ENCODE measurements at regions of chr10 and their contacts with region 1.

Region 1: GRCh38 chr10:62715383-62715782 is 89.1 kb upstream of the ADO start:
- DNase-seq: no peak
- H3K4me3 Mint-ChIP-seq: no peak overlapping the region
- H3K27ac Mint-ChIP-seq: no peak overlapping the region
- H3K4me1 Mint-ChIP-seq: peaks cover 12% of the 10 kb centered on the region
- H3K27me3 Mint-ChIP-seq: no peaks in the 10 kb centered on the region

Region 2: DNA sequence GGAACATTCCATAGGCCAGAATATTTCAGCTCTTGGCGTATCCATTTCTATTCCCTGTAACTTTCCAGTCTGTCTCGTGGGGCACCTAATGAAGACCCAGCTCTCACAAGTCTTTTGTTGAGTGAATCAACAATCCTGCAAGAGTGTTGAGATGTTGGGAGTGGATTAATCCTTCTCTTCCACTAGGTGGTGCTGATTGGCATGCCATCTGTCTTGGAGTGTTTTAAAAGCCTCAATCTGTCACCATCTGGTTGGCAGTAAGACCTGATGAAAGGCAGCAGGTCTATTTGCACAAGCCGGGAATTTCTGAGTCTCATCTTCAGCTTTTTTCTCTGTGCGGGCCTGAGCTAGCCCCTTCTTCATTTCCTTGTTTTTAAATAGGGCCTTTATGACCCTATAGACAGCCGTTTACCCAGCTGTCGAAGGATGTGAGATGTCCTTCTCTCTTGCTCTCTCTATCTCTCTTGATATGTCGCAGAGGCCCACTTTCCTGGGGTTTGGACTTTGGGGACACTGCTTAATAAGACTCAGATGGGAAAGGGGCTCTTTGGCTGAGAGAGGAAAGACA is 160.7 kb before region 1 on chr10:
- intact Hi-C with region 1: no loop called
- DNase-seq: no peak
- H3K4me3 Mint-ChIP-seq: no peak overlapping the region
- H3K27ac Mint-ChIP-seq: no peak overlapping the region
- H3K4me1 Mint-ChIP-seq: no peaks in the 10 kb centered on the region
- H3K27me3 Mint-ChIP-seq: peaks cover 35% of the 10 kb centered on the region

Region 3: DNA sequence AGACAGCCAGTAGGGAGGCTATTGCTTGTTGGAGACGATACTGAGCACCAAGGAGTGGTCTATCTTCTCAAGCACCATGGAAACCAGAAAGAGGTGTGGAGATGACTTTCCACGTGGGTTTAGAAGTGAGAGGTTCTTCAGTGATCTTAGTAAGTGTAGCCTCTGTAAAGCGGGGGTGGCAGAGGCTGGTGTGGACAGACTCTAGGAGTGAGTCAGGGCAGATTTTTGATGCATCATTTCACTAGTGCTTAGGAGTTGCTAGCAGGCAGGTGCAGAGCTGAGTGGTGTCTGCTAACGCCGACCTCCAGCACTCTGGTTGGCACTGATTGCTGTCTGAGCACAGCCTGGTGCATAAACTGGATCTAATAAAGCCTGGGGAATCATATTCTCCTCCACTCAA is 10.8 kb after region 1 on chr10:
- intact Hi-C with region 1: loop called (anchors 1 kb)
- DNase-seq: no peak
- H3K4me3 Mint-ChIP-seq: no peak overlapping the region
- H3K27ac Mint-ChIP-seq: peak overlapping the region; percentile 27
- H3K4me1 Mint-ChIP-seq: peaks cover 54% of the 10 kb centered on the region
- H3K27me3 Mint-ChIP-seq: no peaks in the 10 kb centered on the region

Measured in activated T-helper 2 cell treated with anti-CD3 and anti-CD28 coated beads, Interferon-gamma antibody, Interleukin-2, Interleukin-4, amounts not matched to agents 10 μg/mL and 5 μg/mL and 100 μg/mL, durations not matched to agents 14 hours and 24 hours and 36 hours (primary cell).